Left cardiac atrium (tissue), 4 donors: ENCODE measurements at regions of chr1 and their contacts with region 1.

Region 1: DNA sequence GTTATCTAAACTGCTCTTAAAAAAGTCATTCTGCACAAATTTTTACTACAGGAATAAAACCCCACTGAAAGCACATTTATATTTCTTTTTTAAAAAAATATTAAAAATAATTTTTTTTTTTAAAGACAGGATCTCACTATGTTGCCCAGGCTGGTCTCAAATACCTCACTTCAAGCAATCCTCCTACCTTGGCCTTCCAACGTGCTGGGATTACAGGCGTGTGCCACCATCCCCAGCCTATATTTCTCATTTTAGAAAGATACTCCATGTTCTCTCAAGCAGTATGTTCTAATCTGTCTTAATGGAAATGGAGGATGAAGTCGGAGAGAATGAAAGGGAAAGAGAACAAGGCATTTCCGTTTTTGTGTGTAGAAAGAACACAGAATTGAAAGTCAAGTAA is 17.1 kb downstream of the USP24 start:
- DNase-seq: no peak
- ATAC-seq: no peak

Region 2: GRCh38 chr1:54764133-54764921 is 433.7 kb before region 1 on chr1 and contains the start of gene PARS2:
- intact Hi-C with region 1: no loop called
- DNase-seq: peak; percentile 98
- ATAC-seq: peak; percentile 99
- total RNA-seq, gene PARS2: 2.9 to 3.3 TPM

Region 3: DNA sequence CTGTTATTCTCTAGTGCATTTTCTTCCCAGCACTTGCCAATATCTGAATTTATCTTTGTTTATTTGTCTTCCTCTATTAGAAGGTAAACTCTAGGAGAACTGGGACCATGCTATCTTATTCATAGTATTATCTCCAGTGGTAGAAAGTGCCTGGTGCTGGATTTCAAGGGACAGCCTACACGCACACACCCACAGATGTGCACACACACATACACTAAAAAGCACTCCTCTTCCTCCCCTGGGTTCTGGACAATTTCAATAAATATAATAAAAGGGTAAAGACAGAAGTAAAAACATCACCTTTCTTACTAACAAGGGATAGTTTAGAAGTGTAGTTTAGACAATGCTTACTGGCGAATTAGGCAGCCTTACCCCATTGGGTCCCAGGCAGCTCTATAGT is 45.6 kb after region 1 on chr1:
- intact Hi-C with region 1: loop called in 1 of 2 experiments (anchors 2 kb)
- DNase-seq: no peak
- ATAC-seq: no peak